ENCODE measurements at regions of chr15 and their contacts with region 1.

Region 1: GRCh38 chr15:91271565-91272153 is 171.6 kb downstream of the SV2B start:
- DNase-seq: peak in 4 of 5 donors; percentile 55 to 87 (median 76)
- H3K4me3 ChIP-seq: no peak overlapping the region
- H3K27ac ChIP-seq: no peak overlapping the region
- H3K4me1 ChIP-seq: no peaks in the 10 kb centered on the region
- H3K27me3 ChIP-seq: peaks cover 2% of the 10 kb centered on the region
- CTCF ChIP-seq: peak; percentile 79

Region 2: DNA sequence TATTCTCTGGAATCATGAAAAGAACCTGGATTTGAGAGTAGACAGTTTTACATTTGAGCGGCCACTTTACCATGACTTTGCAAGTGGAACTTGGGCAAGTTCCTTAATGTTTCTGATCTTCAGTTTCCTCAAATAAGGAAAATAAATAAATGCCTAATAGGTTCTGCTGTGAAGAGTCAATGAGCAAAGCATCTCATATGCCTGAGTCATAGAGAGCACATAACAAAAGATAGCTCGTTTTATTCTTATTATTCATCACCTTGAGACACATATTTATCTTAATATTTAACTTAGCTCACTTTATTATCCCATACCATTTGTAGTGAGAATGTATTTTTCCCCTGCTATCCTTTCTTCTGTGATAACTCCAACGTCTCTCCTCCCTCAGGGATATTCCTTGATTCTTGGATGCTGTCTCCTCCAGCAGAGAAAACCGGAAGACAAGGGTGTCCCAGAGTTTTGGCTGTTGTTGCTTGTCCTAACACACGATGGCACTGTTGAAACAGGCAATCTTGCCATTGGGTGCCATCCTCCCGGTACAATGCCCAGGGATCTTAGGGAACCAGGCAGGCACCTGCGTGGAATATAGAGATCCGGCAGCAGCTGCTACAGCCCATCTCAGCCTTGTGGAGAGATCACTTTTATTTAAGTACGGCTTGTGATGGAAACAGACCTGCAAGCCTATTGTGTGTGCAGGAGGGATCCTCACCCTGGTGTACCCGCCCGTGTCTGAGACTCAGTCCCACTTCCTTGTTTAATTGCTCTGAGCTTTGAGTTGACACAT is 215.9 kb before region 1 on chr15:
- intact Hi-C with region 1: loop called (anchors 5 kb)
- DNase-seq: peak in 3 of 5 donors; percentile 70 to 82 (median 78)
- H3K4me3 ChIP-seq: no peak overlapping the region
- H3K27ac ChIP-seq: no peak overlapping the region
- H3K4me1 ChIP-seq: no peaks in the 10 kb centered on the region
- H3K27me3 ChIP-seq: peaks cover 3% of the 10 kb centered on the region
- CTCF ChIP-seq: peak; percentile 86

Region 3: DNA sequence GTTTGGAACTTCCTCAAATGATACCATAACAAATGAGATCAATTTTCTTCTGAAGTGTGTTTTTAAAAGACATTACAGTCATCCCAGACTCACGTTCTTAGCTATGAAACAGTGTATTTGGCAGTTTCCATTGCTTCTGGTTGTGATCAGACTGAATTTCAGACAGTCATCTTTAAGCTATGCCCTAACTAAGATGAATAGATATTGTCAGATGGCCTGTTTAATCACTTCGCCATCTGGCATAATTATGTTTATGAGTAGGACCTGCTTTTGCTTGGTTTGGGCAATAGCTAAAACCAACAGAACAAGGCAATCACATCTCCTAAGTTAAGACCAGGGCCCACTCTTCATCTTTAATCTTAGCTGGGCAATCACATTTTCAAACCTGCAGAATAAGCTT is 141.5 kb after region 1 on chr15:
- intact Hi-C with region 1: no loop called
- DNase-seq: no peak
- H3K4me3 ChIP-seq: no peak overlapping the region
- H3K27ac ChIP-seq: no peak overlapping the region
- H3K4me1 ChIP-seq: no peaks in the 10 kb centered on the region
- H3K27me3 ChIP-seq: no peaks in the 10 kb centered on the region
- CTCF ChIP-seq: no peak

Measured in kidney (tissue), 22 donors.